Caco-2 (cell line): ENCODE measurements at regions of chr2 and their contacts with region 1.

Region 1: GRCh38 chr2:85813982-85814801 is 60.4 kb downstream of the ATOH8 start:
- DNase-seq: peak; percentile 84 to 91
- H3K4me3 ChIP-seq: no peak overlapping the region
- H3K4me3 Mint-ChIP-seq: no peak overlapping the region
- H3K27ac Mint-ChIP-seq: no peak overlapping the region
- H3K4me1 ChIP-seq: no peaks in the 10 kb centered on the region
- H3K4me1 Mint-ChIP-seq: peaks cover 9% of the 10 kb centered on the region
- H3K27me3 ChIP-seq: no peaks in the 10 kb centered on the region; the same call in 1 of the 2 replicates
- H3K27me3 Mint-ChIP-seq: peaks cover 2% of the 10 kb centered on the region
- CTCF ChIP-seq: peak; percentile 97 to 98

Region 2: DNA sequence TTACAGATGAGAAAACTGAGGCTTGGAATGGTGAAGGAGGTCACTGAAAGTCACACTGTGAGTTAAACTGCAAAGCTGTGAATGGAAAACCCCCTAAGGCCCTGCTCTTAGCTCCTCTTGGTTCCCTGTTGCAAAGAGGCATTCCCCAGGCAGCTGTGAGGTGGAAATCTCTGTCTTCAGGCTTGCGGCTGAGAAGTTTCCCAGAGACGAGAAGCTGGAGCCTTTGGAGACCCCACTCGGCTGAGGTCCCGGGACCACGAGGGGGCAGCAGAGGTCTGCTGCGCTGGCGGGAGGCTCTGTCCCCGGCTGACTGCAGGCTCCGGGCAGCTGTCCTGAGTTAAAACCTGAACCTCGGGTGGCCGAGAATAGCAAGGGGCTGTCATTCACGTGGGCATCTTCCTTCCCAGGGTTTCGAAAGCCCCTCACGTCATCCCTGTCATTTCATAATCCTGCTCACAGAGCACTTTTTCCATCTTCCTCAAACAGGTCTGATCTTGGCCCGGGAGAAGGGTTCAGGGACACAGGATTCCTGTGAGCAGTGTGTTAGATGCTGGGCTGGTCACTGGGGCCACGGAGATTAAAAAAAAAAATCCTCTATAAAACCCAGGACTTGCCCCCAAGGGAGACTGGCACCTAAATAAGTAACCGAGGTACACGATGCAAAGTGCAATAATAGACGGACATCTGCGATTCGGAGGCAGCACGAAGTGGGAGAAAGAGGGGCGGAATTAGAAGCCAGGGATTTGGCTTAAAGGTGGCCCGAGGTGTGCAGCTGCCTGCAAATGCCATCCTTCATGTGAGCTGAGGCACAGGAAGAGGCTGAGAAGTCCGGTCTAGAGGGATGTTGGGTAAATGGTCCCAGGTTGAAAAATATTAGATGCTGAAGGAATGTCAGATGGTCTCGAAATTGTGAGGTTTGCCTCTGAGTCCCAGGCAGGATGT is 85.0 kb before region 1 on chr2:
- CTCF ChIA-PET with region 1: interaction called, 46 read pairs
- POLR2A ChIA-PET with region 1: no interaction called
- intact Hi-C with region 1: loop called (anchors 1 kb)
- DNase-seq: peak; percentile 78 to 92
- H3K4me3 ChIP-seq: no peak overlapping the region
- H3K4me3 Mint-ChIP-seq: no peak overlapping the region
- H3K27ac Mint-ChIP-seq: no peak overlapping the region
- H3K4me1 ChIP-seq: no peaks in the 10 kb centered on the region
- H3K4me1 Mint-ChIP-seq: no peaks in the 10 kb centered on the region
- H3K27me3 ChIP-seq: no peaks in the 10 kb centered on the region
- H3K27me3 Mint-ChIP-seq: peaks cover 6% of the 10 kb centered on the region
- CTCF ChIP-seq: peak; percentile 97 to 99

Region 3: DNA sequence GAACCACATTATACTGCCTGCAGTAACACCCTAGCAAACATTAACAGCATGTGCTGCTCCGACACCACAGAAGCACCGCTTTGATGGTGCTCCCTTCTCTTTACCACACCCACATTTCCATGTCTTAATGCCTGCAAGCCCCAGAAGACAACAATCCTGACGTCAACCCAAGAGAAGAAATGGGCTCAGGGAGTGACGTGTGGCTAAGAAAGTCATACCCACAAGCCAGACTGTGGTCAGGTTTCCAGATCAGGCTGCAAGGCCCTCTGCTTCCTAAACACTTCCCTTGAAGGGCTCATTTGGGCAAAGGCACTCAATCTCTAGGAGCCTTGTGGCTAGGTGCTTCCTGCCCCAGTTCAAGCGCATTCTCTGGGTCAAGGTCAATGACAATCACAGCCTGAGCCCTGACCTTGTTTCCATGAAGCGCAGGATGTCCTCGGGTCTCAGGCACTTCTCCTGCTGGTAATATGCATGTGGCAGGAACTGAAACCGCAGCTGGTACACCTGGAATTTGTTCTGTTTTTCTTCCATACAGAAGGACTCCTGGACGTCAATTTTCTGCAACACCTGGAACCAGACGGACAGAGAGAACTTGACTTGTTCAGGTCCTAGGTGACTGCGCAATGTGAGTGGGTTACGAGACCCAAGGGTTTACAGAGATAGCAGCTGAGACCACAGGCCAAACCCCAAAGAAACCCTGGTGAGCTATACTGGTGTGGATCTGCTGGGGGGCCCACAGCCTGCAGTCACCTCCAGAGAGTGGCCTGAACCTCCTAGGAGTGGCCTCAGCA is 224.3 kb after region 1 on chr2:
- CTCF ChIA-PET with region 1: no interaction called
- POLR2A ChIA-PET with region 1: no interaction called
- intact Hi-C with region 1: no loop called
- DNase-seq: peak in 1 of 2 experiments; percentile 21
- H3K4me3 ChIP-seq: no peak overlapping the region
- H3K4me3 Mint-ChIP-seq: no peak overlapping the region
- H3K27ac Mint-ChIP-seq: no peak overlapping the region
- H3K4me1 ChIP-seq: no peaks in the 10 kb centered on the region
- H3K4me1 Mint-ChIP-seq: no peaks in the 10 kb centered on the region
- H3K27me3 ChIP-seq: no peaks in the 10 kb centered on the region
- H3K27me3 Mint-ChIP-seq: no peaks in the 10 kb centered on the region
- CTCF ChIP-seq: no peak